ENCODE measurements at regions of chr10 and their contacts with region 1.

Region 1: DNA sequence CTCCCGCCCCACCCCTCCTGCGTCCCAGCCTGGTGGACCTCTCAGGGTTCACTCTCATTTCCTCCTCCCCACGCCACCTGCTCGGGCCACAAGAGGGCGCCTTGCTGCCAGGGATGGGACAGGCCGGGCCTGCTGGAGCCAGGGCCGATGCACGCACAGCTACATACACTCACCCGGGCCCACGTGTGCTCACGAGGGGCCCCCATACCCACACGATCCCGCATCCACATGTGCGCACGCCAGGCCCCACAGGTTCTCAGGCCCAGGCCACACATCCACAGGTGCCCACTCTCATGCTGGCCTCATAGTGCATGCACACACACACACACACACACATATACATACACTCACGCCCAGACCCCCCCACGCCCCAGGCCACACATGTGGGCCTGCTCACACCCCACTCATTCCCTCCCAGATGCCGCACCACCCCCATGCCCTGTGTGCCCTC is 68.6 kb downstream of the LHPP start:
- DNase-seq: peak; percentile 36 to 96
- H3K4me3 ChIP-seq: no peak overlapping the region
- H3K27ac ChIP-seq: no peak overlapping the region
- H3K4me1 ChIP-seq: peaks cover 0 to 20% (median 4%) of the 10 kb centered on the region in 4 experiments; a peak in 5 of 7 replicates
- H3K27me3 ChIP-seq: no peaks in the 10 kb centered on the region
- CTCF ChIP-seq: peak in 2 of 3 experiments; percentile 95; a peak in 3 of 4 replicates
- EP300 ChIP-seq: no peak
- POLR2A ChIP-seq: no peak
- RAD21 ChIP-seq: peak; percentile 91 to 94

Region 2: GRCh38 chr10:124394583-124394982 is 135.7 kb before region 1 on chr10:
- CTCF ChIA-PET with region 1: no interaction called
- POLR2A ChIA-PET with region 1: no interaction called
- DNase-seq: no peak
- H3K4me3 ChIP-seq: no peak overlapping the region
- H3K27ac ChIP-seq: no peak overlapping the region
- H3K4me1 ChIP-seq: peaks cover 0 to 4% (median 0%) of the 10 kb centered on the region in 4 experiments; a peak in 3 of 7 replicates
- H3K27me3 ChIP-seq: no peaks in the 10 kb centered on the region
- CTCF ChIP-seq: no peak
- EP300 ChIP-seq: no peak
- POLR2A ChIP-seq: no peak
- RAD21 ChIP-seq: no peak

Region 3: GRCh38 chr10:124500757-124501156 is 29.5 kb before region 1 on chr10:
- CTCF ChIA-PET with region 1: interaction called, 10 read pairs
- POLR2A ChIA-PET with region 1: interaction called, 3 read pairs
- DNase-seq: no peak
- H3K4me3 ChIP-seq: no peak overlapping the region
- H3K27ac ChIP-seq: no peak overlapping the region
- H3K4me1 ChIP-seq: peaks cover 7 to 19% (median 9%) of the 10 kb centered on the region in 4 experiments; a peak in 6 of 7 replicates
- H3K27me3 ChIP-seq: no peaks in the 10 kb centered on the region
- CTCF ChIP-seq: no peak
- EP300 ChIP-seq: no peak
- POLR2A ChIP-seq: no peak
- RAD21 ChIP-seq: no peak

Region 4: DNA sequence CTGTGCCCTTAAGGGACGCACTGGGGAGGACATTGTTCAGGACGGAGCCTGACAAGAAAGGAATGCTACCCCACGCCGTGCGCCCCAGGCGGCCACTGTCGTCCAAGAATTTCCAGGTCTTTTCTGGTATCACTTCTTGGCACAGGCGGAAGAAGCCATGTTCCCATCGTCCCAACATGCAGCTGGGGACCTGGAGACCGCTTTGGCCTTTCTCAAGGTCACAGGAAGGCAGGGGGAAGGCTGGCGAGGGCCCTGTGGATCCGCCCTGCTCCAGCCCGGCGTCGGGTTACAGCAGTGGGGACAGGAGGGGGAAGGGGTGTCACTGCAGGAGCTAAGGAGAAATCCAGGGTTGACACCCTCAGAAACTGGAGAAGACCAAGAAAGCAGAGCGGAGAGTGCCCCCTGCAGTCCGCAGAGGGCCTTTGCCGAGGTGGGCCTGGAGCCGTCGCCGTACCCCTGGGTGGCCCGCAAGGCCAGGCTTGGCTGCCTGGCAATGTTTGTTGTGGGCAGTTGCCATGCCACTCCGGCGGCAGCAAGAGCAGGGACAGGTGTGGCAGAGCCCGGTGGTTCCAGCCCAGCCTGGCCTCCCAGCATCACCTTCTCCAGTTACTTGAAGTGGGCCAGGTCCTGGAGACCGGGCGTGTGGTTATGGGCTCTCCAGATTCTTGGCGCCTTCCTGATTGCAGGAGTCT is 35.5 kb after region 1 on chr10:
- CTCF ChIA-PET with region 1: interaction called, 681 read pairs
- POLR2A ChIA-PET with region 1: no interaction called
- DNase-seq: peak; percentile 53 to 87
- H3K4me3 ChIP-seq: no peak overlapping the region
- H3K27ac ChIP-seq: no peak overlapping the region
- H3K4me1 ChIP-seq: peaks cover 3 to 9% (median 7%) of the 10 kb centered on the region in 4 experiments; a peak in 6 of 7 replicates
- H3K27me3 ChIP-seq: no peaks in the 10 kb centered on the region
- CTCF ChIP-seq: peak; percentile 79 to 86 (median 85)
- EP300 ChIP-seq: no peak
- POLR2A ChIP-seq: no peak
- RAD21 ChIP-seq: peak; percentile 82 to 90

Region 5: GRCh38 chr10:124626759-124627380 is 96.6 kb after region 1 on chr10:
- CTCF ChIA-PET with region 1: interaction called, 14 read pairs
- POLR2A ChIA-PET with region 1: no interaction called
- DNase-seq: no peak
- H3K4me3 ChIP-seq: no peak overlapping the region
- H3K27ac ChIP-seq: no peak overlapping the region
- H3K4me1 ChIP-seq: peaks cover 6 to 21% (median 12%) of the 10 kb centered on the region in 4 experiments
- H3K27me3 ChIP-seq: no peaks in the 10 kb centered on the region; a peak in 1 of 7 replicates
- CTCF ChIP-seq: no peak
- EP300 ChIP-seq: no peak
- POLR2A ChIP-seq: no peak
- RAD21 ChIP-seq: no peak